ENCODE measurements at regions of chr19 and their contacts with region 1.

Region 1: DNA sequence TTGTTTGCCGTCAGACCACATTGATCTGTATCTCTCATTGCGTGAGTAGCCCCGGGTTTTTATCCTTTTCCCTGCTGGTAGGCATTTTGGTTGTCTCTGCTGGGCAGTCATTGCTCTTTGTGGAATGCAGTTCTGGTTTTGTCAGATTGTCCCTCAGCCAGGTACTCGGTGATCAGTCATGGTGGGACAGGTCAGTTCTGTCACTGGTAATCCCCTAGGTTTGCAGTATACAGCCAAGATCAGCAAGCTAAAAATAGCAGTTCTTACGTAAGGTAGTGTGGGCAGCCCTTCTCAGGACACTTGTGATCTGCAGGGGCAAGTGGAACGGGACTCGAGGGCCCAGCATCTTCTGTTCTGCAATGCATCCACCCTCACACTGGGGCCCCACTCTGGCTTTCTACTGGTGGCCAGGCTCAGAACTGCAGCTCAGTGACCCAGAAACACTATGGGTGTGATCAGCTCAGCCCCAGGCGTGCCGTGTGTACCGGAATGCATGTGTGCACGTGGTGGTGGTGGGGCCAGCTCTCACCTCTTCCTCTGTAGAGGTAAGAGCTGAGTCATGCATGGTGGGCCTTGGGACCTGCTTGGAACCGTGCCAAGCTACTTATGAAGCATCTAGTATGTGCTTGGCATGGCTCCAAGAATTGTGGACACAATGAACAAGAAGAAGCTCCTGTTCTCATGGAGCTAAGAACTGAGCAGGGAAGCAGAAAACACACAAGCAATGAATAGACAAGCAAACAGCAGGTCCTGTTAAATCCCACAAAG is 6.3 kb downstream of the PLEKHF1 start:
- DNase-seq: peak; percentile 98
- ATAC-seq: peak; percentile 77
- H3K4me3 Mint-ChIP-seq: peak overlapping the region; percentile 64
- H3K27ac Mint-ChIP-seq: peak overlapping the region; percentile 90
- H3K4me1 Mint-ChIP-seq: peaks cover 91% of the 10 kb centered on the region
- H3K27me3 Mint-ChIP-seq: no peaks in the 10 kb centered on the region

Region 2: DNA sequence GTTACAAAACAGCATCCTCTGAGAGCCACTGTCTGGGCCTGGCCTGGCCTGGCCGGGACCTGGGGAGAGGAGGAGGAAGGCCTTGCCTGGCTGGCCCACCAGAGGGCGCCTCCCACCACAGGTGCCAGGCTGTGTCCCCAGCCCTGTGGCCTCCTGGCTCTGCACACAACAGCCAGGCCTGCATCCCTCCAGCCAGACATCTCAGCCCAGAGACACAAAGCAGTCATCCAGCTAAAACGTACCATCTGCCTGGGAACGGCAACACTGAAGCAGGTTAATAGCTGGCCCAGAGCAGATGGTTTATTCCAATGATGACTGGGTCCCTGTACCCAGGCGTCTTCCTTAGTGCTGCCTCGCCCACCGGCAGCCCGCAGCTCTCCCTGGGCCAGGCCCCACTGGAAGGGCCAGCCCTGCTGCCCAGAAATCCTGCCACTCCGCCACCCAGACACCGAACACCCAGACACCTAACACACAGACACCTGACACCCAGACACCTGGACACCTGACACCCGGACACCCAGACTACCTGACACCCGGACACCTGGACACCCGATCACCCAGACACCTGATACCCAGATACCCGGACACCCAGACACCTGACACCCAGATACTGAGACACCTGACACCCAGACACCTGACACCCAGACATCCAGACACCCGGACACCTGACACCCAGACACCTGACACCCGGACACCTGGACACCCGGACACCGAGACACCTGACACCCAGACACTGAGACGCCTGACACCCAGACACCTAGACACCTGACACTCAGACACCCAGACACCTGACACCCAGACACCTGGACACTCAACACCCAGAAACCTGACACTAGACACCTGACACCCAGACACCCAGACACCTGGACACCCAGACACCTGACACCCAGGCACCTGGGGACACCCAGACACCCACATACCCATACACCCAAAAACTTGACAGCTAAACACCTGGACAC is 23.4 kb after region 1 on chr19:
- CTCF ChIA-PET with region 1: interaction called, 28 read pairs
- DNase-seq: peak; percentile 89
- ATAC-seq: peak; percentile 98
- H3K4me3 Mint-ChIP-seq: no peak overlapping the region
- H3K27ac Mint-ChIP-seq: peak overlapping the region; percentile 32
- H3K4me1 Mint-ChIP-seq: peaks cover 16% of the 10 kb centered on the region
- H3K27me3 Mint-ChIP-seq: no peaks in the 10 kb centered on the region

Measured in activated CD8-positive, alpha-beta memory T cell treated with anti-CD3 and anti-CD28 coated beads, Interleukin-2, amount 10 ng/mL, durations not matched to agents 7 days and 5 days (primary cell).